GM12878 (cell line): ENCODE measurements at regions of chr1 and their contacts with region 1.

Region 1: DNA sequence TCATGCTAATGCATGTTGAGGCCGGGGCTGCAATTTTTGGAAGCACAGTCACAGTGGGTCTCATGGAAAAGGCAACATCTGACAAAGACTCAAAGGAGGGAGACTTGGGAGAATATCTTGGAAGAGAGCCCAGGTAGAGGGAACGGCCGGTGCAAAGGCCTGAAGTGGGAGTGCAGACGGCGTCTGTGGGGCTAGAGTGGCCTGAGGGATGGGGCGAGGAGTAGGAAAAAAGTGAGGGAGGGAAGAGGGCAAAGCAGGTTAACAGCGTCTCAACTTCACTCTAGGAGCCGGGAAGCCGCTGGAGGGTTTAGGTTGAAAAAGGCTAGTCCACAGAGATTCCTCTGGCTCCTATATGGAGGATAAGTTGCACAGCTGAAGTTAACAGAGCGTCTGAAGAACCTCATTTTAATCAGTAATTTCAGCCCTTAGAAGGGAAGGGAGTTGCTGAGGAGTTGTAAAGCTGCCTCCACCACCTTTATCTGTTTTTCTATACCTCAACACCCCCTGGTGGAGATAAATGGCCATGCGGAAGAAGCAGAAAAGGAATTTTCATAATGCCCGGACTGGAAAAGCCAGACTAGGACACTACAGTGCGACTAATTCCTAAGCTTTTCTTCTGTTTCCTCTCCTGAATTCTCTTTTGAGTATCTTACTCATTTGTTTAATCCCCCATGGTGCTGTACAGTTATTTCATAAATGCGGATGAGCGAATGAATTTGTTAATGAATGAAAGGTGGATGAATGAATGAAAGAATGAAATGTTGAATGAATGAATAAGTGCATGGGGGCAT is 78.7 kb upstream of the ZNF281 start:
- DNase-seq: peak; percentile 37
- ATAC-seq: peak; percentile 85
- H3K4me3 ChIP-seq: no peak overlapping the region
- H3K27ac ChIP-seq: no peak overlapping the region
- H3K4me1 ChIP-seq: peaks cover 8% of the 10 kb centered on the region
- H3K27me3 ChIP-seq: no peaks in the 10 kb centered on the region
- CTCF ChIP-seq: peak; percentile 72 to 90 (median 86)
- EP300 ChIP-seq: no peak
- POLR2A ChIP-seq: no peak
- RAD21 ChIP-seq: peak; percentile 99

Region 2: GRCh38 chr1:199684686-199685273 is 803.8 kb before region 1 on chr1:
- CTCF ChIA-PET with region 1: interaction called, 14 read pairs
- POLR2A ChIA-PET with region 1: no interaction called
- RAD21 ChIA-PET with region 1: interaction called, 3 read pairs
- SMC1A ChIA-PET with region 1: interaction called, 7 read pairs
- in situ Hi-C with region 1: no loop called
- intact Hi-C with region 1: loop called (anchors 1 kb)
- DNase-seq: peak; percentile 8
- ATAC-seq: peak; percentile 92
- H3K4me3 ChIP-seq: no peak overlapping the region
- H3K27ac ChIP-seq: no peak overlapping the region
- H3K4me1 ChIP-seq: no peaks in the 10 kb centered on the region
- H3K27me3 ChIP-seq: peaks cover 0 to 4% of the 10 kb centered on the region in 2 experiments; a peak in 2 of 4 replicates
- CTCF ChIP-seq: peak; percentile 73 to 75 (median 74)
- EP300 ChIP-seq: no peak
- POLR2A ChIP-seq: no peak
- RAD21 ChIP-seq: peak; percentile 87

Region 3: GRCh38 chr1:200154069-200154767 is 334.4 kb before region 1 on chr1:
- CTCF ChIA-PET with region 1: interaction called, 3 read pairs
- POLR2A ChIA-PET with region 1: no interaction called
- RAD21 ChIA-PET with region 1: interaction called, 10 read pairs
- SMC1A ChIA-PET with region 1: interaction called, 4 read pairs
- in situ Hi-C with region 1: no loop called
- intact Hi-C with region 1: no loop called
- DNase-seq: peak; percentile 88
- ATAC-seq: peak; percentile 89
- H3K4me3 ChIP-seq: no peak overlapping the region
- H3K27ac ChIP-seq: peak overlapping the region; percentile 77
- H3K4me1 ChIP-seq: peaks cover 41% of the 10 kb centered on the region
- H3K27me3 ChIP-seq: no peaks in the 10 kb centered on the region
- CTCF ChIP-seq: no peak
- EP300 ChIP-seq: peak; percentile 83 to 86
- POLR2A ChIP-seq: no peak
- RAD21 ChIP-seq: 0 out of 2 replicates have a peak, but pooled peaks have one; percentile 13

Region 4: GRCh38 chr1:200409761-200410565 is 78.6 kb before region 1 on chr1 and contains the start of gene ZNF281:
- CTCF ChIA-PET with region 1: interaction called, 5 read pairs
- POLR2A ChIA-PET with region 1: no interaction called
- RAD21 ChIA-PET with region 1: interaction called, 11 read pairs
- SMC1A ChIA-PET with region 1: interaction called, 11 read pairs
- in situ Hi-C with region 1: no loop called
- intact Hi-C with region 1: loop called (anchors 5 kb)
- DNase-seq: peak; percentile 85
- ATAC-seq: peak; percentile 94
- H3K4me3 ChIP-seq: peak within 1 kb of the TSS; percentile 82
- H3K27ac ChIP-seq: peak within 1 kb of the TSS; percentile 91
- H3K4me1 ChIP-seq: peaks cover 18% of the 10 kb centered on the region
- H3K27me3 ChIP-seq: no peaks in the 10 kb centered on the region
- CTCF ChIP-seq: no peak
- EP300 ChIP-seq: no peak
- POLR2A ChIP-seq: peak; percentile 80
- RAD21 ChIP-seq: no peak
- polyA plus RNA-seq, gene ZNF281: 8.3 to 9.4 TPM

Region 5: GRCh38 chr1:200473698-200474371 is 14.7 kb before region 1 on chr1:
- CTCF ChIA-PET with region 1: interaction called, 10 read pairs
- POLR2A ChIA-PET with region 1: interaction called, 8 read pairs
- RAD21 ChIA-PET with region 1: interaction called, 19 read pairs
- SMC1A ChIA-PET with region 1: interaction called, 18 read pairs
- in situ Hi-C with region 1: no loop called
- intact Hi-C with region 1: no loop called
- DNase-seq: peak; percentile 57
- ATAC-seq: peak; percentile 69
- H3K4me3 ChIP-seq: peak overlapping the region; percentile 43
- H3K27ac ChIP-seq: peak overlapping the region; percentile 78
- H3K4me1 ChIP-seq: peaks cover 36% of the 10 kb centered on the region
- H3K27me3 ChIP-seq: no peaks in the 10 kb centered on the region
- CTCF ChIP-seq: no peak
- EP300 ChIP-seq: peak in 1 of 2 experiments; percentile 29; a peak in 1 of 4 replicates
- POLR2A ChIP-seq: peak; percentile 28; the same call in 1 of the 2 replicates
- RAD21 ChIP-seq: no peak